Transverse colon (tissue), 4 donors: ENCODE measurements at regions of chr12 and their contacts with region 1.

Region 1: GRCh38 chr12:59414051-59414450 is 181.8 kb upstream of the SLC16A7 start:
- DNase-seq: no peak
- H3K4me3 ChIP-seq: no peak overlapping the region
- H3K27ac ChIP-seq: no peak overlapping the region
- H3K4me1 ChIP-seq: no peaks in the 10 kb centered on the region
- H3K27me3 ChIP-seq: no peaks in the 10 kb centered on the region
- CTCF ChIP-seq: no peak
- EP300 ChIP-seq: no peak
- POLR2A ChIP-seq: no peak

Region 2: DNA sequence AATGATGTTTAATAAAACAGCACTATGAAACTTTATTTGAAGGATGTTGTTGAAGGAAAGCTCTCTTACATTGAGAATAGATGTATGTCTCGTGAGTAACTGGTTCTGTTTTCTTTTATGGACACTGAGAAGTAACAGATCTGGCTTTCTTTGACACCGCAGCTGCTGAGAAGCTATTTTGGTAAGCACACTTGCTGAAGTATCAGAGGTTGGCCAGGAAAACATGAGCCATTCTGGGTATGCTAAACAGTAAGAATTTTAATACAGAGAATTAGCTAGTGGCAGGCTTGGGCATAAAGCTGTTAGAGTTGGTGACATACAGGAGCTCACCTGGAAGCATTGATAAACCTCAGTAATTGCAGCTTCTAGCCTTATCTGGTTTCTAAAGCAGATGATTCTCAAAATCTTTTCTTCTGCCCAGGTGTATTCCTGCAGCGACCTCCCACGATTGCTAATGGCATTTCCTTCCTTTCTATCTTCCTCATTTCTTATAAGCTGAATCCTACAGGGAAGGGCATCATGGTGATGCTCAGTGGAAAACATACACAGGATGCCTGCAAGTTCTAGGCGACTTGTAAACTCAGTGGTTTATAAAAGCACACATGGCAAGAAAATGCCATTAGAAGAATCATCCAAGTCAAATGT is 109.9 kb before region 1 on chr12:
- in situ Hi-C with region 1: no loop called
- intact Hi-C with region 1: no loop called
- DNase-seq: no peak
- H3K4me3 ChIP-seq: no peak overlapping the region
- H3K27ac ChIP-seq: no peak overlapping the region
- H3K4me1 ChIP-seq: no peaks in the 10 kb centered on the region
- H3K27me3 ChIP-seq: no peaks in the 10 kb centered on the region
- CTCF ChIP-seq: no peak
- EP300 ChIP-seq: no peak
- POLR2A ChIP-seq: no peak

Region 3: DNA sequence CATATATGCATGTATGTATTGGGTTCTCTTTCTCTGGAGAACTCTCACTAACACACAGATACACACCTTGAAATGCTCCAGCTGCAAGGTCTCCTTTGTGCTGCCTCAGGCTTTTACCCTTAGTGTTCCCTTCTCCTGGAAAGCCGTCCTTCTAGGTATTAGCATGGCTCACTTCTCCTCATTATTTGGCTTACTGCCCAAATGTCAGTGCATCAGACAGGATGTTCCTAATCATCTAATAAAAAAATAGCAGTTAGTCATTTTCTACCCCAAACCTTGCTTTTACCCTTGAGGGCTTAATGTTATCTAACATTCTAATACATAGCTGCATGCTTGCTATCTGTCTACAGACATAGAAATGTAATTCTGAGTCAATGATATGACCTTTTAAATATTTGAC is 72.8 kb after region 1 on chr12:
- in situ Hi-C with region 1: no loop called
- intact Hi-C with region 1: no loop called
- DNase-seq: no peak
- H3K4me3 ChIP-seq: no peak overlapping the region
- H3K27ac ChIP-seq: no peak overlapping the region
- H3K4me1 ChIP-seq: no peaks in the 10 kb centered on the region
- H3K27me3 ChIP-seq: no peaks in the 10 kb centered on the region
- CTCF ChIP-seq: no peak
- EP300 ChIP-seq: no peak
- POLR2A ChIP-seq: no peak

Region 4: DNA sequence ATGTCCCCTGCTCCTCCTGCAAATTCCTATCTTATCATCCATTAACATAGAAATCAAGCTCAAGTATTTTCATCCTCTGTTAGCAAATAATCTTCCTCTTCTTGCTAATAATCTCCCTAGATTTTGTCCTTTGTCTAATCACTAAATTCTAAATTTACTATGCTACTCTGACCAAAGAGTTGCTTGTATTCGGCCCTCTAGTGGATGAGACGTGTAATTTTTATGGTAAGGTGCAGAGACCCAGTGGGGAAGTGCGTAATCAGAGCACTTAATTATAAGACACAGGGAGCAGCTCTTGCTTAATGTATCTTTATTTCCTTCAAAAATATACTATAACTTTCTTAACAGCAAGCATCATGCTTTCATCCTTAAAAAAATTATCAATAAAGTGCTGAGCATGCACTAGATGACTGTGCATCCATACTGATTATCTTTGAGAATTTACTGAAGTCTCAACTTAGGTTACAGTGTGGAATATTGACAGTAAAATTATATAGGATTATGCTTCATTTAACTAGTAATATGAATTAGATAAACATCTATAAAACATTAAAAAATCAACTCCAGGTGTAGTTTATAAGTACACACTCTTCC is 394.4 kb after region 1 on chr12:
- in situ Hi-C with region 1: loop called in 2 of 4 experiments (anchors 10 to 25 kb)
- intact Hi-C with region 1: loop called (anchors 10 kb)
- DNase-seq: no peak
- H3K4me3 ChIP-seq: no peak overlapping the region
- H3K27ac ChIP-seq: no peak overlapping the region
- H3K4me1 ChIP-seq: no peaks in the 10 kb centered on the region
- H3K27me3 ChIP-seq: no peaks in the 10 kb centered on the region
- CTCF ChIP-seq: peak; percentile 51 to 67 (median 61)
- EP300 ChIP-seq: no peak
- POLR2A ChIP-seq: no peak